Dorsolateral prefrontal cortex (tissue), 120 donors: ENCODE measurements at regions of chr20 and their contacts with region 1.

Region 1: DNA sequence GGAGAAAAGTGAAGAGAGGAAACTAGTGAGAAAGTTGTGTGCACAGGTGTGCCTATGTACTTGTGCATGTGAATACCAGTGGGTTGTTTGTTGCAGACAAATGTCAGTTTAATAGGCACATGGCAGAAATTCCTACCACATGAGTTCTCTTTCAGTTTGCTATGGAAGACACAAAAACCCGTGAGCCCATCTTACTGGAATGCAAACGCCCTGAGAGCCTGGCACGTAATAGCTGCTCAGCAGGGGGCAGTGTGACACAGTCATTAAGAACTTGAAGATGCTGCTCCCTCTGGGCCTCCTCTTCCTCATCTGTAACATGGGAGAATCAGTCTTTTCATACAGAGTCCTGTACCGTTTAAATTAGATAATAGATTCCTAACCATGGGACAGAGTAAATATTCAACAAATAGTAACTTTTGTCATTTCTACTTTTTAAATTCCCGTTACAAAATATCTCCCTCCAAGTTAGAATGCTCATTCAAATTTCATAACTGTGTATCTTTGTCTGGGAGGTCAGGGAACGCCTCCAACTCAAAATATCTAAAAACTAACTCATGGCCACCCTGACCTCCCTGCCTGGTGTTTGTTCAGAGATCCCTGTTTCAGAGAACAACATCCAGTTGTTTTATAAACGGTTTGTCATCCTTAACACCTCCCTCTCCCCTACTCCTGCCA is 802.9 kb downstream of the MAFB start:
- DNase-seq: peak in 6 of 10 donors; percentile 9 to 58 (median 42)
- H3K4me3 ChIP-seq: no peak overlapping the region
- H3K27ac ChIP-seq: no peak overlapping the region
- H3K27me3 ChIP-seq: no peaks in the 10 kb centered on the region
- CTCF ChIP-seq: peak in 52 of 56 donors; percentile 16 to 65 (median 47)

Region 2: DNA sequence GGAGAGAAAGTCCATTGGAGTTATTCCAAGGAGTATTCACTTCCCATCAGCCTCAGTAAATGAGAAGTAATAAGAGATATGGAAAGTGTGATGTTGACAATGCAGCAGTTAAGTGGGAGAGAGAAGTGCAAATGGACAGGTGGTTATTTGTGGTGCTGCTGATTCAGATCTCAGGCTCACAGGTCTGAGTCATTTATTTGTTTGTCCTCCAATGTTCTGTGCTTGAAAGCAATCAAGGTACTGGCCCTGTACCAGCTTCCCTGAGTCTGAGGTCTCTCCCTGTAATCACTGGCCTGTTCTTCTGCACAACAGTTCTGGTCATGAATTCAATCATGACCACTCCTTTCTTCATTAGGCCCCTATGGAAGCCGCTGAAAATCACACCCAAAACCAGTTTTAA is 24.7 kb before region 1 on chr20:
- intact Hi-C with region 1: no loop called
- DNase-seq: no peak
- H3K4me3 ChIP-seq: no peak overlapping the region
- H3K27ac ChIP-seq: no peak overlapping the region
- H3K27me3 ChIP-seq: peaks cover 0 to 6% (median 0%) of the 10 kb centered on the region in 45 donors
- CTCF ChIP-seq: no peak

Region 3: GRCh38 chr20:40962730-40963504 is 1076.8 kb after region 1 on chr20:
- intact Hi-C with region 1: loop called in 1 of 2 experiments (anchors 5 kb)
- DNase-seq: peak; percentile 55 to 84 (median 66)
- H3K4me3 ChIP-seq: peak overlapping the region in 1 of 59 donors; percentile 16
- H3K27ac ChIP-seq: no peak overlapping the region
- H3K27me3 ChIP-seq: no peaks in the 10 kb centered on the region
- CTCF ChIP-seq: peak; percentile 83 to 97 (median 94)